Naive thymus-derived CD4-positive, alpha-beta T cell (primary cell): ENCODE measurements at regions of chr3 and their contacts with region 1.

Region 1: DNA sequence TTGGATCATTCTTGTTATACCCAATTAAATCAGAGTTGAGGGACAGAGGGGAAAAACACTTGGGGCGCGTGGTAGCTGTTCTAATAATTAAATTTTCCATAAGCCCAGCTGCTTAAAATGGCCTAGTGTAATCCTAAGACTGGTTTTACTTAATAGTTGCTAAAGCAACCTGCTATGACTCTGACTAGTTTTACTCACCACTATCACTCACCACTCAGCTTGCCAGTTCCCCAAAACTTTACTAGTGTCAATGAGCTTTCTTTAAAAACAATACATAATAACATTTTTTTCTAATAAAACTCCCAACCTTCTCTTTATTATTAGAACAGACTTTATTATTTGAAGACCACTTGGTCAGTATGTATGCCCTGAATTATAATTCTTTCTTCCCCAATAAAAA is 49.6 kb downstream of the ECT2 start:
- DNase-seq: no peak
- ATAC-seq: no peak
- H3K4me3 ChIP-seq: no peak overlapping the region
- H3K4me3 Mint-ChIP-seq: no peak overlapping the region
- H3K27ac ChIP-seq: no peak overlapping the region
- H3K27ac Mint-ChIP-seq: no peak overlapping the region
- H3K4me1 ChIP-seq: no peaks in the 10 kb centered on the region
- H3K4me1 Mint-ChIP-seq: peaks cover 0 to 15% (median 0%) of the 10 kb centered on the region in 7 donors
- H3K27me3 ChIP-seq: no peaks in the 10 kb centered on the region
- H3K27me3 Mint-ChIP-seq: no peaks in the 10 kb centered on the region

Region 2: GRCh38 chr3:172787746-172788145 is 12.4 kb before region 1 on chr3:
- CTCF ChIA-PET with region 1: interaction called, 3 read pairs
- POLR2A ChIA-PET with region 1: no interaction called
- intact Hi-C with region 1: loop called in 1 of 2 experiments (anchors 1 kb)
- DNase-seq: no peak
- ATAC-seq: no peak
- H3K4me3 ChIP-seq: no peak overlapping the region
- H3K4me3 Mint-ChIP-seq: no peak overlapping the region
- H3K27ac ChIP-seq: no peak overlapping the region
- H3K27ac Mint-ChIP-seq: no peak overlapping the region
- H3K4me1 ChIP-seq: no peaks in the 10 kb centered on the region
- H3K4me1 Mint-ChIP-seq: peaks cover 0 to 3% (median 0%) of the 10 kb centered on the region in 7 donors
- H3K27me3 ChIP-seq: no peaks in the 10 kb centered on the region
- H3K27me3 Mint-ChIP-seq: no peaks in the 10 kb centered on the region

Region 3: DNA sequence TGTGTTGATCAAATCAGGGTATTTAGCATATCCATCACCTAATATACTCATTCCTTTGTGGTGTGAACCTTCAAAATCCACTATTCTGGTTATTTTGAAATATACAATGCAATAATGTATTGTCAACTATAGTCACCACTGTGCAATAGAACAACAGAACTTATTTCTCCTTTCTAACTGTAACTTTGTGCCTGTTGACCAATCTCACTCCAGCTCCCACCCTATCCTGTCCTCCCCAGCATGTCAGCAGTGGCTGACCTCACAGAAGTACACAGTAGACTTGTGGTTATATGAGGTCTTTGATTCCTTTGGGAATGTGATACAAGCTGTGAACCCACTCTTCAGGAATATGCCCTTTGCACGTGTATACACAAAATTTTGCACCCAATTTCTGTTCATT is 14.6 kb after region 1 on chr3:
- CTCF ChIA-PET with region 1: no interaction called
- POLR2A ChIA-PET with region 1: no interaction called
- intact Hi-C with region 1: no loop called
- DNase-seq: no peak
- ATAC-seq: no peak
- H3K4me3 ChIP-seq: no peak overlapping the region
- H3K4me3 Mint-ChIP-seq: no peak overlapping the region
- H3K27ac ChIP-seq: no peak overlapping the region
- H3K27ac Mint-ChIP-seq: no peak overlapping the region
- H3K4me1 ChIP-seq: no peaks in the 10 kb centered on the region
- H3K4me1 Mint-ChIP-seq: no peaks in the 10 kb centered on the region
- H3K27me3 ChIP-seq: no peaks in the 10 kb centered on the region
- H3K27me3 Mint-ChIP-seq: no peaks in the 10 kb centered on the region